Heart right ventricle (tissue), 16 donors: ENCODE measurements at regions of chr2 and their contacts with region 1.

Region 1: DNA sequence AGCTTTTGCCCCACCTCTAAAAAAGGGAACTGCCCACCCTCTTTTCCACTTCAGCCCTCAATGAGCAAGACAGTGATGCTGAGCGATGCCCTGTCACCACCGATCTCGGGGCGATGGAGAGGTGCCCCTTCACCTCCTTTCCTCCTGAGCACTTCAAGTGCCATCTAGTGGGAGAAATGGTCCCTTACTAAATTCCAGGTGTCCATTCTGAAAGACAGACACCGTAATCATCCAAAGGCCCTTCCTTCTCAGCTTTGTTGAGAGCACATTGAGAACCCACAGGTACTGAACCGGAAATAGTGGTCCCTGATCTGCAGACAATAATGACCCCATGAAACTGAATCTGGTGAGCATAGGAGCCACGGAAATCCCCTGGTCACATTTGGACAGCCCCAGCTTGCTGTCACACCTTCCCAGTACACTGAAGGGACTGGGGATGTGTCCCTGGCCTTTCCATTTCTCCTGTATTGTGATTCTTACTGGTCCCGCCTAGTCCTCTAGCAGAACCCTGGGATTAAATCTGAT is 38.5 kb downstream of the KCTD18 start:
- DNase-seq: no peak
- ATAC-seq: no peak
- H3K4me3 ChIP-seq: no peak overlapping the region
- H3K27ac ChIP-seq: no peak overlapping the region
- H3K4me1 ChIP-seq: peaks cover 0 to 13% (median 0%) of the 10 kb centered on the region in 9 donors
- H3K27me3 ChIP-seq: no peaks in the 10 kb centered on the region
- CTCF ChIP-seq: peak in 8 of 9 donors; percentile 23 to 61 (median 50)

Region 2: DNA sequence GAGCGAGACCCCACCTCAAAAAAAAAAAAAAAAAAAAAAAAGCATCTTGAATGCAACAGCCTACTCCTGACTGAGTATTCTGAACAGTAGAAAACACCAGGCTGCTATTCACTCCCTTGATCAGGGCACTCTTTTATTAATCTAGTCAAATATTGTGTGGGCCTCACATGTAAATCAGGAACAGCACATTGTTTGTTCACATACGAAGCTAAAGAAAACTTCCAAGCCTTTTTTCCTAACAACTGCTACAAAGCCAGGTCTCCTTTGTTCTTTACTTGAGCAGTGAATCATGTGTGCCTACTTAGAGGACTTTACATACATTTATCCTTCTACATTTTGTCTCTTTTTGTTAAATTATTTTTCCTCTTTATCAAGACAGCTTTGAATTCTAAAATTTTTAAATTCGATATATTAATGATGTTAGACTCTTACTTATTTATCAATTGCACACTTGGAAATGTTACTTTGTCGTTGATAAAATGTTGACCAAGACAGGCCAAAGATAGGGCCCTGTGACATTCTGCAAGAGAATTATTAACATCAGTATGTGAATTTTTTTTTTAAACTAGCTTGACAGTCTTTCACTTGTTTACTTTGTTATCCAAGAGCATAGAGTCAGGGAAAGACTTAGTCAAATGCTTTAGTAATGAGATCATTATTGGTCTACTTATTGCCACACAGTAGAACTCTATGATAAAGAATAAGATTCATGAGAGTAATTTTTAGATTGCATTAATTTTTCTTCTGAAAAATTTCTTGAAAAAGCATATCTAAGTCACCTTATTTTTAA is 151.6 kb before region 1 on chr2:
- intact Hi-C with region 1: loop called in 3 of 10 experiments (anchors 10 kb)
- DNase-seq: no peak
- ATAC-seq: peak in 6 of 8 donors; percentile 62 to 76 (median 72)
- H3K4me3 ChIP-seq: no peak overlapping the region
- H3K27ac ChIP-seq: peak overlapping the region in 7 of 10 donors; percentile 18 to 51 (median 41)
- H3K4me1 ChIP-seq: peaks cover 0 to 84% (median 47%) of the 10 kb centered on the region in 9 donors
- H3K27me3 ChIP-seq: no peaks in the 10 kb centered on the region
- CTCF ChIP-seq: no peak